ENCODE measurements at regions of chr2 and their contacts with region 1.

Region 1: DNA sequence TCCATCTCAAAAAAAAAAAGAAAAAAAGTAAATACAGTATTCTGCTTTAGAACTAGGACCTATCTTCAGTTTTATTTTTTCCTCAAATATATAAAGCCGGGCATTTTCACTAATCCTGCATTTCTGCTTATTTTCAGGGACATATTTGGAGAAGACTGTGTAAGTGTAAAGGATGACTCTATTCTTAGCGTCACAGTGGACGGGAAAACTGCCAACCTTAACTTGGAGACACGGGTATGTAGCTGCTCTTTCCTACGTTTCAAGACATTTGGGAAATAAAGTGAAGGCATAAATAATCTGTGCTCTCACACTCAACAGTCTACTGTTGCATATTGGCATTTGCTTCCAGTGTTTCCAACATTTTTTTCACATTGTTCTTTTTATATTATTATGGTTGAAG is 3.1 kb upstream of the IAH1 start:
- DNase-seq: no peak
- ATAC-seq: no peak
- H3K4me3 ChIP-seq: no peak overlapping the region
- H3K27ac ChIP-seq: no peak overlapping the region
- H3K4me1 ChIP-seq: peaks cover 0 to under 1% of the 10 kb centered on the region in 2 experiments; a peak in 1 of 5 replicates
- H3K27me3 ChIP-seq: no peaks in the 10 kb centered on the region
- CTCF ChIP-seq: no peak
- EP300 ChIP-seq: no peak
- POLR2A ChIP-seq: no peak
- RAD21 ChIP-seq: no peak

Region 2: GRCh38 chr2:9483107-9483506 is 11.9 kb after region 1 on chr2:
- CTCF ChIA-PET with region 1: no interaction called
- POLR2A ChIA-PET with region 1: interaction called, 10 read pairs
- in situ Hi-C with region 1: no loop called
- intact Hi-C with region 1: no loop called
- DNase-seq: no peak
- ATAC-seq: peak; percentile 12; the same call in 1 of the 3 replicates
- H3K4me3 ChIP-seq: no peak overlapping the region
- H3K27ac ChIP-seq: no peak overlapping the region
- H3K4me1 ChIP-seq: no peaks in the 10 kb centered on the region
- H3K27me3 ChIP-seq: no peaks in the 10 kb centered on the region
- CTCF ChIP-seq: no peak
- EP300 ChIP-seq: no peak
- POLR2A ChIP-seq: no peak
- RAD21 ChIP-seq: no peak

Region 3: GRCh38 chr2:9594366-9595054 is 123.3 kb after region 1 on chr2:
- CTCF ChIA-PET with region 1: no interaction called
- POLR2A ChIA-PET with region 1: no interaction called
- in situ Hi-C with region 1: no loop called
- intact Hi-C with region 1: no loop called
- DNase-seq: peak in 2 of 4 experiments; percentile 38 to 55
- ATAC-seq: peak; percentile 82
- H3K4me3 ChIP-seq: no peak overlapping the region
- H3K27ac ChIP-seq: peak overlapping the region; percentile 57
- H3K4me1 ChIP-seq: peaks cover 5 to 20% of the 10 kb centered on the region in 2 experiments; a peak in 3 of 5 replicates
- H3K27me3 ChIP-seq: no peaks in the 10 kb centered on the region
- CTCF ChIP-seq: no peak
- EP300 ChIP-seq: no peak
- POLR2A ChIP-seq: no peak
- RAD21 ChIP-seq: no peak

Region 4: DNA sequence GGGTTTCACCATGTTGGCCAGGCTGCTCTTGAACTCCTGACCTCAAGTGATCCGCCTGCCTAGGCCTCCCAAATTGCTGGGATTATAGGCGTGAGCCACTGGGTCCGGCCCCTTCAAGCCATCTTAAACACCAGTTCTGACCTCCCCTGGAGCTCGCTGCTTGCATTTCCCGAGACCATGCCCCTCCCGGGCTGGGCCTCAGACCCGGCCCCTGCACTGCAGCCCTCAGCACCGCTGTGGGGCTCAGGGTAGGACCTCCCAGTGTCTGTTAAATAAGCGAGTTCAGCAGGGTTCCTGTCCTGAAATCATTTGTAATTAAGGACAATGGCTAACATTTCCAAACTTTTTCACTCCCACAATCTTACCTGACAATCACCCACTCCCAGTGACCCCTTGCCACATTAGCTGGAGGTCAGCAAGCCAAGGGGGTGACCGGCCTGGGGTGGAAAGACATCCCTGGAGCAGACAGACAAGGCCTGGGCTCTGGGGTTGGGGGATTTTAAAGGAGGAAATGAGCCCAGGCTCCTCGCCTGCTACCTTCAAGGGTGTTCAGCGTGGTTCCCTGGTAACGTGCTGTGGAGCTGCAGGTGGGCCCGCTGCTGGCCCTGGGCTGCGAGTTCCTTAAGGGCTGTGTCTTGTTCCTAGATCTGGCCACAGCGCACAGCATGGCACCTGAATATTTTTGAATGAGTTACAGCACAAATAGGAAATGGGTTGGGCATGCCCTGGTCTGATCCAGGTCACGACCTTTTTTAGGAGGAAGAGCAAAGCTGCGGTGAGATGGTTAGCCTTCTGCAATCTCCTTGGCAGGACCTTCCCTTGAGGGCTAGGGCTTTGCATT is 593.9 kb after region 1 on chr2:
- CTCF ChIA-PET with region 1: no interaction called
- POLR2A ChIA-PET with region 1: no interaction called
- in situ Hi-C with region 1: no loop called
- intact Hi-C with region 1: no loop called
- DNase-seq: no peak
- ATAC-seq: no peak
- H3K4me3 ChIP-seq: no peak overlapping the region
- H3K27ac ChIP-seq: no peak overlapping the region
- H3K4me1 ChIP-seq: peaks cover 0 to 20% of the 10 kb centered on the region in 2 experiments; a peak in 2 of 5 replicates
- H3K27me3 ChIP-seq: no peaks in the 10 kb centered on the region
- CTCF ChIP-seq: no peak
- EP300 ChIP-seq: no peak
- POLR2A ChIP-seq: no peak
- RAD21 ChIP-seq: no peak

Measured in K562 (cell line).